Head of caudate nucleus (tissue), 42 donors: ENCODE measurements at regions of chr5 and their contacts with region 1.

Region 1: DNA sequence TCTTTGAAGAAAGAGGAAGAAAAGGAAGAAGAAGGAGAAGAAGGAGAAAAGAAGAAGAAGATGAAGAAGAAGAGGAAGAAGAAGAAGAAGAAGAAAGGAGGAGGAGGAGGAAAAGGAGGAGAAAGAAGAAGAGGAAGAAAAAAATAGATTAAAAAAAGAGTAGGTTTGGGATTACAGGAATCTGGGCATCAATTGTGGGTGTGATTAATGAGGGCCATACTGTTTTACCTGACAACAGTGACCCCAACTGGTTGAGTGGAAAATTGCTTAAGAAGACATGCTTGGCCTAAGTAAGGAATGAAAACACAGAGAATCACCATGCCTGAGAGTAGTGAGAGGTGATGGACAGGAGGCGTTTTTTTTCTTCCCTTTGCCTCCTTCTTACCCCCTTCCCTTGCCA is 114.6 kb downstream of the FAM170A start:
- DNase-seq: peak in 11 of 42 donors; percentile 4 to 72 (median 23)

Region 2: GRCh38 chr5:119470851-119471451 is 273.0 kb before region 1 on chr5:
- intact Hi-C with region 1: loop called (anchors 2 kb)
- DNase-seq: peak in 19 of 42 donors; percentile 13 to 73 (median 37)

Region 3: DNA sequence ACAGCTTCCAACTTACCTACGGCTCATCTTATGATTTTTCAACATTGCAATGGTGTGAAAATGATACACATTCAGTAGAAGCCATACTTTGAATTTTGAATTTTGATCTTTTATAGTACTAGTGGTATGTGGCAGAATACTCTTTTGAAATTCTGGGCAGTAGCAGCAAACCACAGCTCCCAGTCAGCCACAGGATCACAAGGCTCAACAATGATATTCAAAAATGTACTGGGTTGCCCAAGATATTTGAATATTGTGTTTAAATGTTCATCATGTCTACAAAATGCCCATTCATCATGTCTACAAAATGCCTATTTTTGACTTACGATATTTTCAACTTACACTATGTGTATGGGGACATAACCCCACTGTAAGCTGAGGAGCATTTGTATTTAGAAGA is 638.9 kb after region 1 on chr5:
- intact Hi-C with region 1: no loop called
- DNase-seq: no peak